ENCODE measurements at regions of chr9 and their contacts with region 1.

Region 1: DNA sequence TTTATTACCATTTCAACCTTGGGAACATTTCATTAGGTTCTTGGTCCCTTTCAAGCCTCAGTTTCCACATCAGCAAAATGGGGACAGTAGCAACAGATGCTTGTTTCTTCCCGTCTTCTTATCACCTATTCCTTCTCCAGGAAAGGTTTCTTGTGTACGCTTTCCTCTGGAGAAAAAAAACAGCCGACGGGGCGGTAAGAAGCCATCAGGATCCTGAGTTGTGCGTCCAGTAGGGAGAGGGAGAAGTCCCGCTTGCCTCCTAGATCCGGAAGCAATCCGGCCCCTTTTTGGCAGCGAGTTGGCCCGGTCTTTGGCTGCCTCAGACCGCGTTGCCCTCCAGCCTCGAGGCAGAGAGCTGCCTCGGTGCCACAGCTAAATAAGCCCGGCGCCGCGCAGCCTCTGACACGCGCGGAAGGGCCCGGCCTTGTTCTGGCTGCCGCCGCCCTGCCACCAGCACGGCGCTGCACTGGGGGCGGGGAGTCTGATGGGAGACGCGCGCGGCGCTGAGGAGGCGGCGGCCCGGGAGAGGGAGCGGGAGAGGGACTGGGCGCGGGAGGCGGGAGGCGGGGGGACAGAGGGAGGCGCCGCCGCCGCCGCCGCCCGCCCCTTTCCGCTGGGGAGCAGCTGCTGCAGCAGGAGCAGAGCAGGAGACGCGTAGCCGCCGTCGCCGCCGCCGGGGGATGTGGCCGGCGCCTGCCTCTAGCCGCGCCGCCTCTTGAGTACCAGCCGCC is at the start of gene SLC44A1:
- DNase-seq: peak; percentile 96
- H3K4me3 Mint-ChIP-seq: peak within 1 kb of the TSS; percentile 83
- H3K27ac Mint-ChIP-seq: peak within 1 kb of the TSS; percentile 79
- H3K4me1 Mint-ChIP-seq: peaks cover 6% of the 10 kb centered on the region
- H3K27me3 Mint-ChIP-seq: peaks cover 27% of the 10 kb centered on the region
- CTCF ChIP-seq: no peak
- total RNA-seq, gene SLC44A1: 15.2 and 15.9 TPM in 2 replicates

Region 2: GRCh38 chr9:104747558-104748358 is 496.4 kb before region 1 on chr9 and contains the start of gene NIPSNAP3A:
- CTCF ChIA-PET with region 1: interaction called, 3 read pairs
- POLR2A ChIA-PET with region 1: interaction called, 11 read pairs
- intact Hi-C with region 1: no loop called
- DNase-seq: peak; percentile 83
- H3K4me3 Mint-ChIP-seq: peak within 1 kb of the TSS; percentile 85
- H3K27ac Mint-ChIP-seq: peak within 1 kb of the TSS; percentile 87
- H3K4me1 Mint-ChIP-seq: peaks cover 17% of the 10 kb centered on the region
- H3K27me3 Mint-ChIP-seq: no peaks in the 10 kb centered on the region
- CTCF ChIP-seq: no peak
- total RNA-seq, gene NIPSNAP3A: 15.4 and 15.5 TPM in 2 replicates

Region 3: GRCh38 chr9:105157130-105157583 is 87.0 kb before region 1 on chr9:
- CTCF ChIA-PET with region 1: interaction called, 22 read pairs
- POLR2A ChIA-PET with region 1: interaction called, 7 read pairs
- intact Hi-C with region 1: loop called (anchors 1 kb)
- DNase-seq: peak; percentile 67
- H3K4me3 Mint-ChIP-seq: no peak overlapping the region
- H3K27ac Mint-ChIP-seq: no peak overlapping the region
- H3K4me1 Mint-ChIP-seq: peaks cover 9% of the 10 kb centered on the region
- H3K27me3 Mint-ChIP-seq: no peaks in the 10 kb centered on the region
- CTCF ChIP-seq: peak; percentile 51

Region 4: DNA sequence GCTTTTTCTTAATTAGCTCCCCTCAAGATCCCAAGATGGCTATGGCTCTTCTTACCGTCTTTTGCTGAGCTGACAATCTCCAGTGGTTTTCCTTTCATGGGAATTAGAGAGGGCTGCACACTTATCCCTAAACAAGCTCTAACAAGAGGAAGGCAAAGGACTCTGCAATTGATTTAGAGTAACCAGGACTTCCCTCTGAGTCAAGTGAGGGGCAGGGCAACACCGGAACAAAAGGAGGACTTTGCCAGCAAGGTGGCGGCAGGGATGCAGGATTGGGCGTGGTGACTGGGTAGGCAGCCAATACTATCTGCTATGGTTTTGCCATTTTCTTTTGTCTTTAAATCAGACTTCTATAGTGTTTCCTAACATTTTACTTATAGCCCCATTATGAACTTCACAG is 10.1 kb after region 1 on chr9:
- CTCF ChIA-PET with region 1: interaction called, 6 read pairs
- POLR2A ChIA-PET with region 1: interaction called, 14 read pairs
- intact Hi-C with region 1: no loop called
- DNase-seq: peak; percentile 45
- H3K4me3 Mint-ChIP-seq: no peak overlapping the region
- H3K27ac Mint-ChIP-seq: no peak overlapping the region
- H3K4me1 Mint-ChIP-seq: peaks cover 18% of the 10 kb centered on the region
- H3K27me3 Mint-ChIP-seq: no peaks in the 10 kb centered on the region
- CTCF ChIP-seq: no peak

Region 5: DNA sequence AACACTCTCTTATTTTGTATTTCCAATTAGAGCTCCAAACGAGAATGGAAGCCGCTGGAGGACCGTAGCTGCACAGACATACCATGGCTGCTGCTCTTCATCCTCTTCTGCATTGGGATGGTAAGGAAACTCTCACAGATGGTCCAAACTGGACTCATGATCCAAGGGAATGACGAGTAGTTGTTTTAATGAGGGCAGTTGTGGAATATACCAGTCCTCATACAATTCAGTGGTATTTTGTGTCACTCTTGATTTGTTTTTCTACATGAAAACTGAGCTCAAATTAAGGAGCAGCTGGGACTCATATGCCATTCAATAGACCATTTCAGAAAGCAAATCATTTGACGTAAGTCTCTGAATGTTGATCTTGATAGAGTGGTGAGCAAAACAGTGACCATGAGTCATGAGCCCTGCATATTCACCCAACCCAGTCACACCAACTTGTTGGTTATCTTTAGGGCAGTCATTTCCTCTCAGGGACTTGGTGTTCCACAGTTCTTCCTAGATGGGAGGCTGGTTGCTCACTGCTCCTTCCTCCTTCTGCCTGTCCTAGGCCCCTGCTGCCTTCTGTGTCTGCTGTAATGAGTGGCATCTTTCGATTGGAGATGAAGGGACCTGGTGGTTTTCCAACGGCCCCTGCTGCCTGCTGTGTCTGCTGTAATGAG is 55.2 kb after region 1 on chr9:
- CTCF ChIA-PET with region 1: interaction called, 5 read pairs
- POLR2A ChIA-PET with region 1: interaction called, 37 read pairs
- intact Hi-C with region 1: no loop called
- DNase-seq: peak; percentile 86
- H3K4me3 Mint-ChIP-seq: no peak overlapping the region
- H3K27ac Mint-ChIP-seq: peak overlapping the region; percentile 78
- H3K4me1 Mint-ChIP-seq: peaks cover 30% of the 10 kb centered on the region
- H3K27me3 Mint-ChIP-seq: no peaks in the 10 kb centered on the region
- CTCF ChIP-seq: no peak

Region 6: DNA sequence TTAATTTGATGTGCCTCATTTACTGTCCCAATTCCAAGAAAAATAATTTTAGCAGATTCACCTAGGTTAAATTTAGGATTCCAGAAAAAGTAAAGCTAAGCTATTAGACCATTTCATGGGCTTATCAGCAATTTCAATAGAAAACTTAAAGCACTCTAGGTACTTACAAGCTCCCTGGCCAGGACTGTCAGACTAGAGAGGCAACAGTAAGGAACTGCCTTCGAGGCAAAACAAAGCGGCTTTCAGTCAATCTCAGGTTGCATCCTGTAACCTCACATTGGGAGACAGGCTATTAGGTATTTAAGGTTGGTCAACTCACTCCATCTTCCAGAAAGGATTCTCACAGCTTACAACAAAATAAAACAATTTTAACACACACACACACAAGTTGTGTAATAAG is 154.9 kb after region 1 on chr9:
- CTCF ChIA-PET with region 1: interaction called, 4 read pairs
- POLR2A ChIA-PET with region 1: interaction called, 10 read pairs
- intact Hi-C with region 1: no loop called
- DNase-seq: no peak
- H3K4me3 Mint-ChIP-seq: no peak overlapping the region
- H3K27ac Mint-ChIP-seq: no peak overlapping the region
- H3K4me1 Mint-ChIP-seq: no peaks in the 10 kb centered on the region
- H3K27me3 Mint-ChIP-seq: no peaks in the 10 kb centered on the region
- CTCF ChIP-seq: no peak

Region 7: GRCh38 chr9:106921341-106921899 is 1677.3 kb after region 1 on chr9:
- CTCF ChIA-PET with region 1: no interaction called
- POLR2A ChIA-PET with region 1: no interaction called
- intact Hi-C with region 1: no loop called
- DNase-seq: peak; percentile 29
- H3K4me3 Mint-ChIP-seq: peak overlapping the region; percentile 38
- H3K27ac Mint-ChIP-seq: peak overlapping the region; percentile 82
- H3K4me1 Mint-ChIP-seq: peaks cover 36% of the 10 kb centered on the region
- H3K27me3 Mint-ChIP-seq: no peaks in the 10 kb centered on the region
- CTCF ChIP-seq: no peak

Measured in MCF 10A (cell line).